ENCODE measurements at regions of chr6 and their contacts with region 1.

Region 1: DNA sequence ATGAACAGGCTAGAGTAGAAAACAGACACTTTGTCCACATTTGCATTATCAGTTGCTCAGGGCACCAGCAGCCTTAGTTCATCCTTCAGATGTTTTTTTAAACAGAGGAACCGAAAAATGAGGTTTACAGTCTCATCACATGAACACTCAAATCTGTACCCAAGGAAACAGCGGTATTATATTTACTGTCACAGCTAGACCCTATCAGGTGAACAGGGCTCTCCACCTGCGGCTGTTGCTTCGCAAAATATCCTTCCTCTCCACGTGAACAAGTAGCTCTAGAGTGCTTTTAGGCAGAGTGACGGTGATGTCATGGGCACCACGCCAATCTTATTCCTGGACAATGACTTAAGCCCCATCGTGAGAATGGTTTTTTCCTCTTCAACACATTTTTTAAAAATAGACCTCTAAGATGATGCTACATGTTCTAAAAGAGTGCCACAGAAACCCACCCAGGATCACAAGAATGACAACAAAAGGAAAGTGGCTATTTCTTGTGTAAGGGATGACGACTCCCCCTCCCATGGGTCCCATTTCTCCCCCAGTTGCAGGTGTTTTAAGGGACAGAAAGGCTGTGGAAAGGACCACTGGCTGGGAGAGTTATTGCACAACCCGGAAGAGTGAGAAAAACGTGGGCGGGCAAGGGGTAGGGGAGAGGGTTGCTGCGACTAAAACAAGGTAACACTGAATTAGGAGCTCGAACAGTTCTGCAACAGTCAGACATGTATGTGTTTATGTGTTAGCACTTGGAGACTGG is 77.7 kb downstream of the EFHC1 start:
- H3K4me3 Mint-ChIP-seq: no peak overlapping the region
- H3K27ac Mint-ChIP-seq: peak overlapping the region; percentile 9
- H3K4me1 Mint-ChIP-seq: peaks cover 38% of the 10 kb centered on the region
- H3K27me3 Mint-ChIP-seq: no peaks in the 10 kb centered on the region

Region 2: GRCh38 chr6:52598123-52598823 is 100.4 kb after region 1 on chr6:
- intact Hi-C with region 1: no loop called
- H3K4me3 Mint-ChIP-seq: peak overlapping the region; percentile 44
- H3K27ac Mint-ChIP-seq: peak overlapping the region; percentile 59
- H3K4me1 Mint-ChIP-seq: peaks cover 79% of the 10 kb centered on the region
- H3K27me3 Mint-ChIP-seq: no peaks in the 10 kb centered on the region

Region 3: DNA sequence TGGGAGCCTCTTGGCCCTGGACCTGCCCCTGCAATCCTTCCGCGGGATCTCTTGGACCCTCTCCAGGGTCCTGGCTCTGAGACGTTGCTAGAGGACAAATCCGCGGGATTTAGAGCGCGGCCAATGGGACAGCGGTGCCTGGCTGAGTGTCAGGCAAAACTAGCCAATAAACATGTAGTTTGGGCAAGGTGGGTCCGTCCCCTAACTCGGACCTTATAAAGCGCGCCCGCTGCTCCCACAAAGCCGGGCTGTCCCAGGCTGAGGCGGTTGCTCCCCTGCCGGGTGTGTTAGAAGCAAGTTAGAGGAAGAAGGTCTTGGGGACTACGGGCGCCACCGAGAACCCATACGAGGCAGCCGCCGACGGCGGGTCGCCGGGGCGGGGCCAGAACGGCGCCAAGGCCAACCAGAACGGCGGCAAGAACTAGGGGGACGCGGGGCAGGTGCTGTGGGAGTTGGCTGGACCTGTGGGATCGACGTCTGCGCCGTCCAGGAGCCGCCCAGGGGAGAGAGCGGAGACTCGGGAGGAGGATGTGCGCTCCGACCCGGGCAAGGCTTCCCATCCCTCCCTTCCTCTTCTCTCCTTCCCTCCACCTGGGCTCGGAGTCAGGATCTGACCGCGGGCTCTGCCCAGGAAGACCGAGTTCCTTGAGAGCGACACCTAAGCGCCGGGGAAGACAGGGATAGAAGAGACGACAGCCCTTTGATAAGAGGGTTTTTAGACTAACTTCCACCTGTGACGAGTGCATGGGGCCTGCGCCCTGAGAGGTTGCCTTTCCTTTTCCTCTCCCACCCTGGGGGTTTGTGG is 166.6 kb after region 1 on chr6:
- intact Hi-C with region 1: loop called (anchors 10 kb)
- H3K4me3 Mint-ChIP-seq: no peak overlapping the region
- H3K27ac Mint-ChIP-seq: no peak overlapping the region
- H3K4me1 Mint-ChIP-seq: no peaks in the 10 kb centered on the region
- H3K27me3 Mint-ChIP-seq: peaks cover 17% of the 10 kb centered on the region

Measured in dendritic cell treated with granulocyte-macrophage colony-stimulating factor and Interleukin-4, amounts not matched to agents 40 ng/mL and 50 ng/mL, for 4 days (primary cell).